GM12878 (cell line): ENCODE measurements at regions of chr3 and their contacts with region 1.

Region 1: DNA sequence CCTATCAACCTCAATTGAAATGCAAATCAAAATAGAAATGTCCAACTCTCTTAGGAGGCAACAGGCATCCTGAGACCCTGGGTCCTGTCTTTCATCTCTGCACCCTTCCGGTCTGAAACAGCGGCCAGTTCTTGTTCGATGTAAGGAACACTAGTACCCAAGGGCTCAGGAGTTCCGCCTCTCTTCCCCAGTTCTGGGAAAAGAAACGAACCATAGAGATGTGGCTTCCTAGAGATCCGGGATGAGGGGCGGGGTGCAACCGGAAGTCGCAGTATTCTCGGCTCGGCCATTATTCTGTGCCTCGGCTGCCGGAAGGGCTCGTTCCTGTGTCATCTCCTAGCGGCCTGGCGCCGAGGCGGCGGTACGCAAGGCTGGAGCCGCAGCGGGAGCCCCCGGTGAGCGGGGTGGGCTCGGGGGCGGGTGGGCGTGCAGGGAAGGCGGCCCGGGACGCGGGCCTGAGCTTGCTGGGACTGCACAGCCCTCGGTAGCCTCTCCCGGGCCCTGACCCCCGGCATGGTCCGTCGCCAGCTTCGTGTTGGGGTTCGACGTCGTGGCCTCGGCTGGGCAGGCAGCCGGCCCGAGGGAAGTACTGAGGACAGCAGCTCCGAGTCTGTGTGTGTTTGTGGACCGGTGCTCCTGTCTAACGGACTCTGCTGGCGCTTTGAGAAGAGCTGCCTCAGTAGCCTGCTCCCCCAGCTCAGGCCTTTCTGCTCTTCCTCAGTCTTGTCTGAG is at the start of gene ZNF197:
- DNase-seq: peak; percentile 48
- ATAC-seq: peak; percentile 97
- H3K4me3 ChIP-seq: peak within 1 kb of the TSS; percentile 75
- H3K27ac ChIP-seq: peak within 1 kb of the TSS; percentile 76
- H3K4me1 ChIP-seq: no peaks in the 10 kb centered on the region
- H3K27me3 ChIP-seq: no peaks in the 10 kb centered on the region
- CTCF ChIP-seq: peak in 2 of 3 experiments; percentile 2 to 10; a peak in 1 of 6 replicates
- EP300 ChIP-seq: no peak
- POLR2A ChIP-seq: peak; percentile 88
- RAD21 ChIP-seq: no peak
- polyA plus RNA-seq, gene ZNF197: 3.2 to 4.4 TPM

Region 2: GRCh38 chr3:44318891-44319311 is 306.0 kb before region 1 on chr3:
- CTCF ChIA-PET with region 1: no interaction called
- POLR2A ChIA-PET with region 1: no interaction called
- RAD21 ChIA-PET with region 1: no interaction called
- SMC1A ChIA-PET with region 1: no interaction called
- in situ Hi-C with region 1: no loop called
- intact Hi-C with region 1: no loop called
- DNase-seq: no peak
- ATAC-seq: no peak
- H3K4me3 ChIP-seq: no peak overlapping the region
- H3K27ac ChIP-seq: no peak overlapping the region
- H3K4me1 ChIP-seq: no peaks in the 10 kb centered on the region
- H3K27me3 ChIP-seq: no peaks in the 10 kb centered on the region
- CTCF ChIP-seq: no peak
- EP300 ChIP-seq: no peak
- POLR2A ChIP-seq: no peak
- RAD21 ChIP-seq: no peak

Region 3: GRCh38 chr3:44685128-44685800 is 60.3 kb after region 1 on chr3:
- CTCF ChIA-PET with region 1: interaction called, 4 read pairs
- POLR2A ChIA-PET with region 1: interaction called, 3 read pairs
- RAD21 ChIA-PET with region 1: no interaction called
- SMC1A ChIA-PET with region 1: interaction called, 7 read pairs
- in situ Hi-C with region 1: no loop called
- intact Hi-C with region 1: loop called (anchors 5 kb)
- DNase-seq: peak; percentile 27
- ATAC-seq: peak; percentile 99
- H3K4me3 ChIP-seq: peak overlapping the region; percentile 60; the same call in 1 of the 2 replicates
- H3K27ac ChIP-seq: no peak overlapping the region
- H3K4me1 ChIP-seq: no peaks in the 10 kb centered on the region
- H3K27me3 ChIP-seq: no peaks in the 10 kb centered on the region
- CTCF ChIP-seq: no peak
- EP300 ChIP-seq: no peak
- POLR2A ChIP-seq: peak; percentile 80
- RAD21 ChIP-seq: no peak

Region 4: DNA sequence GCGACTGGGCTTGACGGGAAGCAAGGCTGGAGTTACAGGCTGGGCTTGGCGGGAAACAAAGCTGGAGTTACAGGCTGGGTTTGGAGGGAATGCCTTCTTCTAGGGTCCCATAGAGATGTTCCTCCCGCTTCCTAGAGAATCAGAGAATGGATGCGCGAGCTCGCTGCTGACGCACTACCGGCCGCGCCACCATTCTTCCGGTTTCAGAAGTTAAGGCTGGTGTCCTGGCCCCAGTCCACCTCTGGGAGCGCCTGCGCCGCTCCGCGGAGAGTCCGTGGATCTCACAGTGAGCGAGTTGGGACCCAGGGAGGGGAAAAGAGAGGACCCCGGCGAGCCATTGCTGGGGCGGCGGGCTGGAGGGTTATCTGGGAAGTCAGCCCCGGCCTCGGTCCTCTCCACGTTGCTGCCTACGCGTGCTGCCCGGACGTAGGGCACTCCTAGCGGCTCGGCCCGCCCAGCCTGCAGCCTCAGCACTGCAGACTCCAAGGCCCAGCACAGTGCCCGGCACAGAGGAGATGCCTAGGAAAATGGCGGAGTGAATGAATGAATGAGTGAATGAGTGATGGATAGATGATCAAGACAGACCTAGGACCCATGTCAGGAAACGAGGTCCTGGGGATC is 87.7 kb after region 1 on chr3 and contains the start of gene ZNF502:
- CTCF ChIA-PET with region 1: no interaction called
- POLR2A ChIA-PET with region 1: no interaction called
- RAD21 ChIA-PET with region 1: no interaction called
- SMC1A ChIA-PET with region 1: no interaction called
- in situ Hi-C with region 1: no loop called
- intact Hi-C with region 1: no loop called
- DNase-seq: no peak
- ATAC-seq: peak; percentile 77
- H3K4me3 ChIP-seq: peak within 1 kb of the TSS; percentile 48; the same call in 1 of the 2 replicates
- H3K27ac ChIP-seq: no peak within 1 kb of the TSS
- H3K4me1 ChIP-seq: no peaks in the 10 kb centered on the region
- H3K27me3 ChIP-seq: no peaks in the 10 kb centered on the region
- CTCF ChIP-seq: no peak
- EP300 ChIP-seq: no peak
- POLR2A ChIP-seq: peak; percentile 45; the same call in 1 of the 2 replicates
- RAD21 ChIP-seq: no peak
- polyA plus RNA-seq, gene ZNF502: 0.84 to 1.0 TPM

Region 5: GRCh38 chr3:45455040-45455439 is 830.1 kb after region 1 on chr3:
- CTCF ChIA-PET with region 1: no interaction called
- POLR2A ChIA-PET with region 1: no interaction called
- RAD21 ChIA-PET with region 1: no interaction called
- SMC1A ChIA-PET with region 1: no interaction called
- in situ Hi-C with region 1: no loop called
- intact Hi-C with region 1: no loop called
- DNase-seq: no peak
- ATAC-seq: no peak
- H3K4me3 ChIP-seq: no peak overlapping the region
- H3K27ac ChIP-seq: no peak overlapping the region
- H3K4me1 ChIP-seq: no peaks in the 10 kb centered on the region
- H3K27me3 ChIP-seq: no peaks in the 10 kb centered on the region
- CTCF ChIP-seq: no peak
- EP300 ChIP-seq: no peak
- POLR2A ChIP-seq: no peak
- RAD21 ChIP-seq: no peak